ENCODE measurements at regions of chr7 and their contacts with region 1.

Region 1: GRCh38 chr7:45157653-45158401 is at the start of gene RAMP3:
- DNase-seq: peak; percentile 61
- ATAC-seq: peak; percentile 33
- H3K4me3 ChIP-seq: peak within 1 kb of the TSS; percentile 52
- H3K27ac ChIP-seq: peak within 1 kb of the TSS; percentile 76
- H3K4me1 ChIP-seq: no peaks in the 10 kb centered on the region
- H3K27me3 ChIP-seq: no peaks in the 10 kb centered on the region
- CTCF ChIP-seq: no peak
- total RNA-seq, gene RAMP3: 255 TPM

Region 2: GRCh38 chr7:45259966-45260646 is 102.3 kb after region 1 on chr7:
- intact Hi-C with region 1: loop called (anchors 5 kb)
- DNase-seq: peak; percentile 81
- ATAC-seq: peak; percentile 93
- H3K4me3 ChIP-seq: no peak overlapping the region
- H3K27ac ChIP-seq: no peak overlapping the region
- H3K4me1 ChIP-seq: no peaks in the 10 kb centered on the region
- H3K27me3 ChIP-seq: peaks cover 7% of the 10 kb centered on the region
- CTCF ChIP-seq: peak; percentile 99

Measured in upper lobe of right lung (tissue), 1 donor.